AG04449 (cell line): ENCODE measurements at regions of chrX and their contacts with region 1.

Region 1: DNA sequence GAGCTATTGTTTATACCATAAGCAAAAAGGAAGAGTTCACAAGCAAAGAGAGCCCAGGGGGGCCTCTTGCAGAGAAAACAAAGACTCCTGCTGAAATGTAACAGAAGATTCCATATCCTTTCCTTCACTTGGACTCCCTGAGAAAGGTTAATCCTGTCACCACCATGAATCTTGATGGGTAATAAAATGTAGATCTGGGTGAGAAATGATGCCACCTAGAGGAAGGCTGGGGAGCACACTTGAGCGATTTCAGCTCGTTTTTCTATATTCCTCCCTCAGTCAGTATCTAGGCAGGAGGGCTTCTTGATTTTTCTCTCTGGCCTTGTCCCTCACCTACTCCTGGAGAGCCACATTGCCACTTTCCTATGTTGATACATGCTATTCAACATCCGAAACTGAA is 10.2 kb upstream of the KCNE5 start:
- DNase-seq: no peak
- H3K4me3 ChIP-seq: no peak overlapping the region
- CTCF ChIP-seq: peak; percentile 33

Region 2: DNA sequence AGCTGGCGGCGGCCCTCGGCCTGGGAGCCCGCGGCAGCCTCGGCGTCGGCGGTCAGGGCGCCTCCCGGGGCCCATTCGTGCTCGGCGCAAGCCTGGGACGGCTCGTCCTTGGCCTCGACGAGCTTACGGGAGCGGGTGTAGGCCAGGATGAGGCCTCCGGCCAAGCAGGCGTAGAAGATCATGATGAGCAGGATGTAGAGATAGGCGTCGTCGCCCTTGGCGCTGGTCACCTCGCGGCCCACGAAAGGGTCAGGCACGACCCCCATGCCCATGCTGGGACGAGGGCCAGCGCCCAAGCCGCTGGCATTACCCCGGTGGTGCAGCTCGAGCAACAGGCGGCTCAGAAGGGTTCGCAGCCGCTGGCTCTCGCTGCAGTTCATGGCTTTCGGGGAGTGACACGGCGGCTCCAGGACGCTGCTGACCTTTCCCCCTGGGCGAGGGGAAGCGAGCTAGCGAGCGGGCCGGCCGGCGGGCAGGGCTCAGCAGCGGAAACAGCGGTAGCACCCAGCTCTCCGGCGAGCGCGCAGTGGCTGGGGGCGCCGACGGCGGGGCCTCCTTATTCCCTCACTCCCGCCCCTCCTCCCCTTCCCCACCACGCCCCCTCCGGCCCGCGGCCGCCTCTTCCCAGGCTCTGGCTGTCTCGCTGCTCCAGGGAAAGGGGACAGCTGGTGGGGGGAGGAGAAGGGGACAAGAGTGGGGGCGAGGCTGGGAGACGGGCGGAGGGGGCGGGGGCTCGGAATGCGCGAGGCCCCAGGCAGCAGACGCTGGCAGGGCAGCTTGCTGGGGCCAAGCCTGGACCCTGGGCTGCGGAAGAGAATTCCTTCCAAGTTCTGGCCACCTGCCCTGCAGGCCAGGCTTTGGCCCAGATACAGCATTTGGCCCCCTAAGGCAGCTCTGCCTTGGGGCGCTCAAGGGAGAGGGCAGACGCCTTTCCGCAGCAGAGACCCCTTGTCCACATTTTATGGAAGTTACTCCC is 10.2 kb before region 1 on chrX and contains the start of gene KCNE5:
- CTCF ChIA-PET with region 1: interaction called, 54 read pairs
- POLR2A ChIA-PET with region 1: no interaction called
- DNase-seq: no peak
- H3K4me3 ChIP-seq: no peak within 1 kb of the TSS
- CTCF ChIP-seq: no peak